Prostate gland (tissue), 2 donors: ENCODE measurements at regions of chr6 and their contacts with region 1.

Region 1: DNA sequence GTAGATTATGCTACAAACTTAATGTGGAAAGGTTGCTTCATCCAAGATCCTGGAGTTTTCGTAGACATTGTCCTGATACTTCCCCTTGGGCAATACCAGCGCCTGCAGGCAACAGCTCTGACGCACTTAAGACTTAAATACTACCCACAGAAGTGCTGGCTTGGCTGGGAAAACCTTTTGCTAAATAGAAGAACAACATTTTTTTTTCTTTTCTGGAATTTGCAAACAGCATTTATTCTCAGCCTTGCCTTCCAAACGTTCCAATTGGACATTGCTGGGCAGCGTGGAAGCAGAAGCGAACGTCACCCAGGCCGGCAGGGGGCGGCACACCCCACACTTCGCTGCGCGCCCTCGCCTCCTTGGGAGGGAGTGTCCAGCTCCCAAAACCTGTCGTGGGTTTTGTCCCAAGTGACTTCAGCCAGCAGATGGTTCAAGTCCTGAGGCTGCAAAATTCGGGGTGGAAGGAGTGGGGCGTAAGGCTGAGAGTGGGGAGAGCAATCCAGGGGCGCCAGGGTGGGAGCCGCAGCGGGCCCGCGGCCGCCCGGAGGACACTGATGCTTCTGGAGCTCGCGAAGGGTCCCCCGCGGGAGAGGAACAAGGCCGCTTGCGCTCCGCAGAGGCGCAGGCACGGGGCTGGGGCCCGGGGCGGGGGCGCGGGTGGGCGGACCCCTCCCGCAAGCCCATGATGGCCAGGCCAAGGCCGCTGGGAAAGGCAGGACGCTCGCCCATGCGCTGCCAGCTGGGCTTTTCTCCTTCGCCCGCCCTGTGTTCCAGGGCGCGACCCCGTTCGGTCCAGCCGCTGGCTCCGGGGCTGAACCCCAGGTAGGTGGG is 60.8 kb upstream of the MAP3K4 start:
- DNase-seq: peak; percentile 65
- H3K4me3 ChIP-seq: peak overlapping the region; percentile 43
- H3K27ac ChIP-seq: peak overlapping the region in 1 of 2 donors; percentile 13
- H3K4me1 ChIP-seq: no peaks in the 10 kb centered on the region
- H3K27me3 ChIP-seq: no peaks in the 10 kb centered on the region
- CTCF ChIP-seq: peak; percentile 78 to 93 (median 90)
- POLR2A ChIP-seq: no peak

Region 2: DNA sequence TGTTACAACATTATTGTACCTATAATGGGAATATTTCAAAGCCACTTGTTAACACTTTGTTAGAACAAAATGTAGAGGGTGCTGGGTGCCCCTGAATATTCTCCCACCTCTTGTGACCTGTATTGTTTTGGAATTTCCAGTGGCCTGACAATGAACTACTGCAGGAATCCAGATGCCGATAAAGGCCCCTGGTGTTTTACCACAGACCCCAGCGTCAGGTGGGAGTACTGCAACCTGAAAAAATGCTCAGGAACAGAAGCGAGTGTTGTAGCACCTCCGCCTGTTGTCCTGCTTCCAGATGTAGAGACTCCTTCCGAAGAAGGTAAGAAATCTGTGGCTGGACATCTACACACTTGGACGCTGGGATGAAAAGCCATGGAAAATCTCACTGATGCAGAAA is 199.9 kb before region 1 on chr6:
- intact Hi-C with region 1: no loop called
- DNase-seq: no peak
- H3K4me3 ChIP-seq: no peak overlapping the region
- H3K27ac ChIP-seq: no peak overlapping the region
- H3K4me1 ChIP-seq: no peaks in the 10 kb centered on the region
- H3K27me3 ChIP-seq: no peaks in the 10 kb centered on the region
- CTCF ChIP-seq: no peak
- POLR2A ChIP-seq: no peak

Region 3: GRCh38 chr6:160986851-160987250 is 56.1 kb after region 1 on chr6:
- intact Hi-C with region 1: loop called (anchors 10 kb)
- DNase-seq: no peak
- H3K4me3 ChIP-seq: no peak overlapping the region
- H3K27ac ChIP-seq: no peak overlapping the region
- H3K4me1 ChIP-seq: no peaks in the 10 kb centered on the region
- H3K27me3 ChIP-seq: no peaks in the 10 kb centered on the region
- CTCF ChIP-seq: no peak
- POLR2A ChIP-seq: no peak